Activated CD4-positive, alpha-beta T cell treated with anti-CD3 and anti-CD28 coated beads for 36 hours (primary cell): ENCODE measurements at regions of chr6 and their contacts with region 1.

Region 1: GRCh38 chr6:94177429-94177828 is 758.1 kb upstream of the EPHA7 start:
- DNase-seq: no peak
- ATAC-seq: no peak
- H3K4me3 Mint-ChIP-seq: no peak overlapping the region
- H3K27ac Mint-ChIP-seq: no peak overlapping the region
- H3K4me1 Mint-ChIP-seq: no peaks in the 10 kb centered on the region
- H3K27me3 Mint-ChIP-seq: no peaks in the 10 kb centered on the region

Region 2: GRCh38 chr6:92979281-92979680 is 1198.1 kb before region 1 on chr6:
- CTCF ChIA-PET with region 1: no interaction called
- POLR2A ChIA-PET with region 1: no interaction called
- intact Hi-C with region 1: loop called in 1 of 2 experiments (anchors 5 kb)
- DNase-seq: no peak
- ATAC-seq: no peak
- H3K4me3 Mint-ChIP-seq: no peak overlapping the region
- H3K27ac Mint-ChIP-seq: no peak overlapping the region
- H3K4me1 Mint-ChIP-seq: no peaks in the 10 kb centered on the region
- H3K27me3 Mint-ChIP-seq: no peaks in the 10 kb centered on the region

Region 3: DNA sequence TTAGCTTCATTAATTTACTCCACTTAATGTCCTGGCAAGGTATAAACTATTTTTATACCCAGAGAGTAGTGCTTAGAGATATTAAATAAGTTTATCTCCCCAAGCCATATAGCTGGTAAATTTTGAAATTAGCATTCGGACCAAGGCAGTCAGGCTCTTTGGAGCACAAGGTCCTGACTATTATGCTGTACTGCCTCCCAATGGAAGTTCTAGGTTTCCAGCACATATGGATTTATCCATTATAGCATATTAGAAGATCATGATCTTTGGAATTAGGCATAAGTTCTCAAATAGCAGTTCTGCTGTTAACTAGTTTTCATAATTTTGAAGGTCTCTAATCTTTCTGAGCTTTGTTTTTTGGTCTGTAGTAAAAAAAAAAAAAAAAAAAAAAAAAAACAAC is 77.3 kb after region 1 on chr6:
- CTCF ChIA-PET with region 1: no interaction called
- POLR2A ChIA-PET with region 1: no interaction called
- intact Hi-C with region 1: no loop called
- DNase-seq: no peak
- ATAC-seq: no peak
- H3K4me3 Mint-ChIP-seq: no peak overlapping the region
- H3K27ac Mint-ChIP-seq: no peak overlapping the region
- H3K4me1 Mint-ChIP-seq: no peaks in the 10 kb centered on the region
- H3K27me3 Mint-ChIP-seq: no peaks in the 10 kb centered on the region